OCI-LY7 (cell line): ENCODE measurements at regions of chr4 and their contacts with region 1.

Region 1: DNA sequence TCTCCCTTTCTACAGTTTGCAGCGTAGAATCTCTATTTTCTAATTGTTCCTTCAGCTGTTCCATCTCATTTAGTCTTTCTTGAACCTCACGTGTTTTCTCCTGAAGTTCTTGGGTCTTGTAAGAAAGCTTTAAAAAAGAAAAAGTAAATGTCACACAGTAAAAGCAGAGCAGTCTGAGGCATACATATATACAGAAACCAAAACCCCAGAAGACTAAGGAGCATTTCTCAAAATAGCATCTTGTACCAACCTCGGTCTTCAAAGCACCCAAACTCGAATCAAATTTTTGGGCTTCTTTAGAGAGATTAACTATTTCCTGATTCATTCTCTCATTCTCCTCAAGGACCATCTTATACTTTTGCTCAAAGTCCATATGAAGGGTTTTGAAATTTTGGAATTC is 39.4 kb downstream of the CENPE start:
- DNase-seq: no peak
- H3K4me3 ChIP-seq: no peak overlapping the region
- H3K27ac ChIP-seq: no peak overlapping the region
- H3K4me1 ChIP-seq: no peaks in the 10 kb centered on the region
- CTCF ChIP-seq: no peak

Region 2: GRCh38 chr4:103067841-103068547 is 90.8 kb before region 1 on chr4:
- CTCF ChIA-PET with region 1: no interaction called
- POLR2A ChIA-PET with region 1: no interaction called
- intact Hi-C with region 1: no loop called
- DNase-seq: no peak
- H3K4me3 ChIP-seq: no peak overlapping the region
- H3K27ac ChIP-seq: no peak overlapping the region
- H3K4me1 ChIP-seq: peaks cover 17% of the 10 kb centered on the region
- CTCF ChIP-seq: no peak

Region 3: GRCh38 chr4:103198111-103198765 is 39.5 kb after region 1 on chr4 and contains the start of gene CENPE:
- CTCF ChIA-PET with region 1: no interaction called
- POLR2A ChIA-PET with region 1: interaction called, 11 read pairs
- intact Hi-C with region 1: no loop called
- DNase-seq: peak; percentile 92
- H3K4me3 ChIP-seq: peak within 1 kb of the TSS; percentile 86
- H3K27ac ChIP-seq: peak within 1 kb of the TSS; percentile 41
- H3K4me1 ChIP-seq: peaks cover 20% of the 10 kb centered on the region
- CTCF ChIP-seq: no peak
- total RNA-seq, gene CENPE: 23.6 and 39.4 TPM in 2 replicates